Naive thymus-derived CD8-positive, alpha-beta T cell (primary cell): ENCODE measurements at regions of chr11 and their contacts with region 1.

Region 1: GRCh38 chr11:62427630-62428233 is 8.9 kb downstream of the SCGB1A1 start:
- DNase-seq: no peak
- ATAC-seq: no peak
- H3K4me3 Mint-ChIP-seq: peak overlapping the region in 2 of 10 donors; percentile 26 to 63
- H3K27ac Mint-ChIP-seq: peak overlapping the region in 8 of 10 donors; percentile 53 to 90 (median 78)
- H3K4me1 Mint-ChIP-seq: peaks cover 11 to 48% (median 39%) of the 10 kb centered on the region in 4 donors
- H3K27me3 Mint-ChIP-seq: no peaks in the 10 kb centered on the region

Region 2: DNA sequence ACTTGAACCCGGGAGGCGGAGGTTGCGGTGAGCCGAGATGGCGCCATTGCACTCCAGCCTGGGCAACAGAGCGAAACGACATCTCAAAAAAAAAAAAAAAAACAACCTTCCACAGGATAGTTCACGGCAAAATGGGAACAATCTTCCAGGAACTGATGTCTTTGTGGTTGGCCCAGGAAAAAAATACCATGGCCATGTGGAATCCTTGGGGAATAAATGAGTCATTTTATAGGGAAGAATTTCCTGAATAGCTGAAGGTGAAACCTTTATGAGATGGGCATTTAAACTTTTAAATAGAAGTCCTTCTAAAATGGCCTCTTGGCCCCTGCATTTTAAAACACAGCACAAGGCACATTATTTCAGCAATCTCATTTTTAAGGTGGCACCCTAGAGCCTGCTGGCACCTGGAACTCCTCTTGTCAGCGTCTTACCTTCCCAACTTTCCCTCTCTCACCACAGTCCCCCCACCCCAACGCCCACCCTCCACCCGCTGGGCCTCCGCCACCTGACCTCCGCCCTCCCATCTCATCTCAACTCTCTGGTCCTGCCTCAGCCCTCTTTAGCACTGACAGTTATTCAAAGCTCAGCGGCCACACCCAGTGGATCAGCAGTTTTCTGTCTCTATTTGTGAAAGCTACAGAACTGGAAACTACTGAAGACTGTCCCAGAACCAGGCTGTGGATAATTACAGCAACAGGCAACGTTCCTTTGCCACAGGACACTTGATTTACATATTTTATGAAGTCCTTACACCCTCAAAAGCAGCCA is 34.2 kb after region 1 on chr11:
- POLR2A ChIA-PET with region 1: no interaction called
- DNase-seq: no peak
- ATAC-seq: no peak
- H3K4me3 Mint-ChIP-seq: no peak overlapping the region
- H3K27ac Mint-ChIP-seq: no peak overlapping the region
- H3K4me1 Mint-ChIP-seq: peaks cover 0 to 16% (median 1%) of the 10 kb centered on the region in 4 donors
- H3K27me3 Mint-ChIP-seq: no peaks in the 10 kb centered on the region

Region 3: DNA sequence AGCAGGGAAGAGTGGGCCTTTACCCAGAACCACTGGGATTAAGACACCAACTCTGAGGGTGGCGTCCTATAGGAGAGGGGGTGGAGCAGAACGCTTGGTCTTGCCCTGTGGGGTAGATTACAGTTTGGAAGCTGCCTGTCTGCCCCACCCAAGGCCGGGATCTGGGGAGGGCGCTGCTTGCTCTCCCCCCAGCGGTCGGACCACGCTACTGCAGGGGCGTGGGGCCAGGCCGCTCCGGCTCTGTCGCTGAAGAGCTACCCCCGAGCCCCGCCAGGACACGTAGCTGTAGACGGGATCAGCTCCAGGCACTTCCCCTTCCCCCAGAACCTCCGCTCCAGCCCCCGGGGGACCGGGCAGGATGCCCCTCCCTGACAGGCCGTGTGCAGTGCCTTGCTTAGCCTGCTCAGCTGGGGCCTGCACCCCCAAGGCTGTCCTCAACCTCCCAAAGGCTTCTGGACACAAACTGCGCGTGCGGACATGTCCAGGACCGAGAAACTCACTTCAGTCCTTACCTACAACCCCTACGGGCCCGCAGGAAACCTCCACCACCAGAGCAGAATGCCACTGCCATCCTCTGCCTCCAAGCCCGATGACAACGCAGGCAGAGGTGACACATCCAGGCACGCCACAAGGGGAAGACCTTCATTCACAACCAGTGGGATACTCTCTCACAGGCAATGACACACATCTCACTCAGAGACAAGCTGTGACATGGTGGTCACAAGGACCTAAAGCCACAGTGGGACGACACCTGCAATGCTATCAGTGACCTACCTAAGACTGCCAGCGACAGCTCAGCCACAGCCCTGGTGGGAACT is 115.2 kb after region 1 on chr11:
- POLR2A ChIA-PET with region 1: interaction called, 12 read pairs
- DNase-seq: peak; percentile 49 to 80 (median 71)
- ATAC-seq: peak; percentile 28 to 39
- H3K4me3 Mint-ChIP-seq: peak overlapping the region; percentile 62 to 95 (median 92)
- H3K27ac Mint-ChIP-seq: peak overlapping the region; percentile 68 to 99 (median 88)
- H3K4me1 Mint-ChIP-seq: peaks cover 40 to 79% (median 74%) of the 10 kb centered on the region in 4 donors
- H3K27me3 Mint-ChIP-seq: no peaks in the 10 kb centered on the region